Gastrocnemius medialis (tissue), 4 donors: ENCODE measurements at regions of chr11 and their contacts with region 1.

Region 1: GRCh38 chr11:63023841-63024648 is 8.4 kb upstream of the SLC22A8 start:
- DNase-seq: peak; percentile 59 to 70
- ATAC-seq: peak; percentile 84 to 87
- H3K4me3 ChIP-seq: no peak overlapping the region
- H3K27ac ChIP-seq: no peak overlapping the region
- H3K4me1 ChIP-seq: peaks cover 0 to 7% of the 10 kb centered on the region in 2 donors
- H3K27me3 ChIP-seq: peaks cover 0 to 9% (median 8%) of the 10 kb centered on the region in 3 donors
- CTCF ChIP-seq: peak; percentile 95 to 100 (median 98)
- POLR2A ChIP-seq: no peak

Region 2: DNA sequence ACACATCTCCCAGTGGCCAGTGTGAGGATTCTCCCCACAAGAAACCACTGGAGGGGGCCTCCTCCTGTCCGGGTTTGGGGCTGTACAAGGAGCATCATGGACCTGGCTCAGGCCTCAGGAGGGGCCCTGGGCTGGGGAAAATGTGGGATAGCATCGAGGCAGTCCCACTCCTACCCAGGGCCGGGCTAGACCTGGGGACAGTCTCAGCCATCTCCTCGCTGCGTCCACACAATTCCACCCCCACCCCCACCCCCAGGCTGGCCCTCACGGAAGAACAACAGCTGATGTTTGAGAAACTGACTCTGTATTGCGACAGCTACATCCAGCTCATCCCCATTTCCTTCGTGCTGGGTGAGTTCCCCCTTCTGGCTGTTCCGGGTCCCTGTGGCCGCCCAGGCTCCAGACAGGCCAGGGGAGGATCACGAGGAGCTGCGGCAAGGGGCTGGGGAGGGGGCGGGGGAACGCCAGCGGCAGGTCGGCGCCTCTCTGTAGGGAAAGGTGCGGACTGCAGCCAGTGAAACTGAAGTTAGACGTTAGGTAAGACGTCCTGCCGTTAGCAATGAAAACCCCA is 1069.1 kb before region 1 on chr11:
- in situ Hi-C with region 1: no loop called
- intact Hi-C with region 1: no loop called
- DNase-seq: peak; percentile 65 to 75
- ATAC-seq: peak; percentile 93 to 95
- H3K4me3 ChIP-seq: peak overlapping the region; percentile 42 to 52 (median 49)
- H3K27ac ChIP-seq: peak overlapping the region; percentile 49 to 69 (median 64)
- H3K4me1 ChIP-seq: peaks cover 9 to 14% of the 10 kb centered on the region in 2 donors
- H3K27me3 ChIP-seq: peaks cover 9 to 20% (median 13%) of the 10 kb centered on the region in 3 donors
- CTCF ChIP-seq: peak in 3 of 5 experiments; percentile 18 to 29 (median 29)
- POLR2A ChIP-seq: peak; percentile 18 to 25

Region 3: DNA sequence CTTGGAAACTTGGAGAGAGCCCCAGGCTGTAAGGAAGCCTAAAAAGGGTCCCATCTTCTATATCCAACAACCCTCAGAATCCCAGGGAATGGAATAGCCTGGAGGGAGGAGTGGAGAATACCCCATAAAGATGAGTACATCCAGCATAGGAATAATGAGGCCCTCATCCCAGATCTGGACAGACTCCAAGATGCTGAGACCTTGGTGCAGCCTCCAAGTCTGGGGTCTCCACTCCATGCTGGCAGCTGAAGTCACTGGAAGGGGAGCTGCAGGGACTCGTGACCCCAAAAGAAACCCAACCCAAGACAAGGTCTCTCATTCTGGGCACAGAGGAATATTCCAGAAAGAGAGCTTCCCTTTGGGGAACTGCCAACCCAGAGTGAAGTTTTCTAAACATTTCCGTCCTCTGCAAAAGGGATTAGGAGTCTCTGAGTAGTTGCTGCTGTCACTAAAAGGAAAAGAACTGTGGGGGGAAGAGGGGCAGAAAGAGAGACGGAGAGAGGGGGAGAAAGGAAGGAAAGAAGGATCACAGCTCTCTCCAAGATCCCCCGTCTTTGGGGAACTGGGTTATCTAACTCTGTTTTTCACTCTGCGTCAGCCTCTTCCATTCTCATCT is 604.6 kb before region 1 on chr11:
- in situ Hi-C with region 1: no loop called
- intact Hi-C with region 1: no loop called
- DNase-seq: no peak
- ATAC-seq: no peak
- H3K4me3 ChIP-seq: no peak overlapping the region
- H3K27ac ChIP-seq: peak overlapping the region in 3 of 4 donors; percentile 22 to 52 (median 35)
- H3K4me1 ChIP-seq: no peaks in the 10 kb centered on the region
- H3K27me3 ChIP-seq: no peaks in the 10 kb centered on the region
- CTCF ChIP-seq: no peak
- POLR2A ChIP-seq: no peak

Region 4: DNA sequence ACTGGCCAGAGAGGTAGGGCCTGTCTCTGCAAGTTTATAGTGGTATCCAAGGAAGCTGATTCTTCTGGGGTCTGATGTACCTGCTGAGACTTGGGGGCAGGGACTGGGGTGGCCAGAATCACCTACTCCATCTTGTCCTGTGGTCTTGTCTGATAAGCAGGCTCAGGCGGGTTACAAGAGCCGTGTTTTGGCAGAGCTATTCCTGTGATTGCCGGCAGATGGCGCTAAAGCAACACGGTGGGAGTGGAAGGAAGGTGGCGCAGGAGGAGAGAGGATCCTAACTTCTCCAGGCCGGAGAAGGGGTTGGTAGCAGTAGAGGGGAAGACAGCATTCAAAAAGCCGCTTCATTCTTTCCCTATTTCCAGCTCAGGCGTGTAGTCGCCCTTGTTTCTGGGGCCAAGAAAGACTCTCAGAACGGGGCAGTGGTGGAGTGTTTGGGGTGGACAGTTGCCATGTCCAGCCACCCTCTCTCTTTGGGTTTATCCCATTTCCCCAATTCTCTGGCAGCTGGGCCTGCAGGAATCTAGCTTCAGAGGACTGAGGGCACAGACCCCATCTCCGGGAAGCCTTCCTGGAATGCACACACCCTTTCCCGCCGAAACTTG is 118.0 kb before region 1 on chr11:
- in situ Hi-C with region 1: loop called (anchors 5 kb)
- intact Hi-C with region 1: loop called (anchors 1 kb)
- DNase-seq: peak; percentile 47 to 70
- ATAC-seq: peak; percentile 88 to 92
- H3K4me3 ChIP-seq: no peak overlapping the region
- H3K27ac ChIP-seq: no peak overlapping the region
- H3K4me1 ChIP-seq: peaks cover 0 to 6% of the 10 kb centered on the region in 2 donors
- H3K27me3 ChIP-seq: no peaks in the 10 kb centered on the region
- CTCF ChIP-seq: peak; percentile 92 to 100 (median 95)
- POLR2A ChIP-seq: no peak